ENCODE measurements at regions of chr17 and their contacts with region 1.

Region 1: GRCh38 chr17:75456417-75457046 is at the start of gene TMEM94:
- DNase-seq: peak; percentile 89 to 98 (median 97)
- H3K4me3 ChIP-seq: peak within 1 kb of the TSS; percentile 67 to 99 (median 95)
- H3K27ac ChIP-seq: peak within 1 kb of the TSS; percentile 80 to 100 (median 97)
- H3K27me3 ChIP-seq: no peaks in the 10 kb centered on the region
- CTCF ChIP-seq: peak in 24 of 56 donors; percentile 6 to 48 (median 21)
- total RNA-seq, gene TMEM94: 78.0 to 220 (median 129) TPM

Region 2: GRCh38 chr17:75476271-75476671 is 19.7 kb after region 1 on chr17:
- intact Hi-C with region 1: loop called in 1 of 2 experiments (anchors 2 kb)
- DNase-seq: peak in 9 of 10 donors; percentile 21 to 87 (median 79)
- H3K4me3 ChIP-seq: peak overlapping the region in 53 of 59 donors; percentile 1 to 60 (median 38)
- H3K27ac ChIP-seq: peak overlapping the region in 58 of 59 donors; percentile 46 to 96 (median 88)
- H3K27me3 ChIP-seq: no peaks in the 10 kb centered on the region
- CTCF ChIP-seq: peak in 3 of 56 donors; percentile 6 to 16 (median 7)

Region 3: GRCh38 chr17:75645889-75646637 is 189.5 kb after region 1 on chr17:
- intact Hi-C with region 1: no loop called
- DNase-seq: peak in 9 of 10 donors; percentile 71 to 91 (median 87)
- H3K4me3 ChIP-seq: peak overlapping the region in 19 of 59 donors; percentile 4 to 49 (median 23)
- H3K27ac ChIP-seq: peak overlapping the region; percentile 77 to 100 (median 97)
- H3K27me3 ChIP-seq: no peaks in the 10 kb centered on the region
- CTCF ChIP-seq: peak in 17 of 56 donors; percentile 11 to 51 (median 22)

Measured in dorsolateral prefrontal cortex (tissue), 120 donors.